Endothelial cell of umbilical vein (primary cell): ENCODE measurements at regions of chr11 and their contacts with region 1.

Region 1: DNA sequence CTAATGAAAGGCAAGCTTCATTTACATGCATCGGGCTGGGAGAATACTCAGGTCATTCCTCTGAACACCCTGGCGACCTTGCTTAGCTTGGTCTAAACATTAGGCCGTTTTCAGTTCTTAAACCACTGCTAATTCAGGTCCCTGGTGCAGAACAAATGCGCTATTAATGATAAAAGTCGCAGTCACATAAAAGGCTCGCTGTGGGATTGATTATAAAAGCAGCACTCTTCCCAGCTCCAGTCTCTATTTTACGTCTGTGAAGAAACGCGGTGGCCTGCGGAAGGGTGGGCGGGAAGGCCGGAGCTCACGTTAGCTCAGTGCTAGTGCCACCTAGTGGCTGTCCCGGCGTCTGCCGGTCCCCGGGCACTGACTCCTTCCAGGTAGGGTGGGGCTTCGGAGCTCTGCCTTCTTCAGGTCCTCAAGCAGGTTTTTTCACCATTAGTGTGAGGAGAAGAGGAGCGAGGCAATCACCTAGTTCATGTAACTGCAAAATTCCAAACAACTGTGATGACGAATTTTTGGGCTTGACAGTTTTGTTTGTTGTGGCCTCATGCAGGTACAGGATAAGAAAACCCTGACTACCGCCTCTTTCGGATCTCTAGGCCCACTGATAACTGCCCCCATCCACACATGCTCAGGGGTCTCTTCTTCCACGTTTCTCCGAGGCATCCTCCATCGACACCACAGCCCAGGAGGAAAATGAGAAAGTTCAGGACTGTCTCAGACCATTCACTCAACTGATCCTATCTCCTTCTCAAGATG is 66.5 kb upstream of the CLMP start:
- DNase-seq: peak; percentile 68
- H3K4me3 ChIP-seq: peak overlapping the region in 1 of 3 experiments; percentile 38
- H3K27ac ChIP-seq: no peak overlapping the region
- H3K4me1 ChIP-seq: no peaks in the 10 kb centered on the region
- H3K27me3 ChIP-seq: peaks cover 4 to 5% of the 10 kb centered on the region in 2 experiments
- CTCF ChIP-seq: peak; percentile 94 to 98
- POLR2A ChIP-seq: no peak

Region 2: GRCh38 chr11:123054301-123055065 is 207.0 kb before region 1 on chr11:
- CTCF ChIA-PET with region 1: interaction called, 10 read pairs
- POLR2A ChIA-PET with region 1: no interaction called
- dilution Hi-C with region 1: no loop called
- intact Hi-C with region 1: no loop called
- DNase-seq: peak; percentile 68
- H3K4me3 ChIP-seq: no peak overlapping the region
- H3K27ac ChIP-seq: no peak overlapping the region
- H3K4me1 ChIP-seq: peaks cover 13% of the 10 kb centered on the region
- H3K27me3 ChIP-seq: no peaks in the 10 kb centered on the region
- CTCF ChIP-seq: peak; percentile 62 to 65
- POLR2A ChIP-seq: peak; percentile 50

Region 3: GRCh38 chr11:123188508-123189165 is 72.9 kb before region 1 on chr11:
- CTCF ChIA-PET with region 1: interaction called, 10 read pairs
- POLR2A ChIA-PET with region 1: no interaction called
- dilution Hi-C with region 1: no loop called
- intact Hi-C with region 1: no loop called
- DNase-seq: peak; percentile 73
- H3K4me3 ChIP-seq: no peak overlapping the region
- H3K27ac ChIP-seq: no peak overlapping the region
- H3K4me1 ChIP-seq: peaks cover 11% of the 10 kb centered on the region
- H3K27me3 ChIP-seq: peaks cover 0 to 4% of the 10 kb centered on the region in 2 experiments
- CTCF ChIP-seq: peak in 1 of 2 donors; percentile 13
- POLR2A ChIP-seq: no peak

Region 4: DNA sequence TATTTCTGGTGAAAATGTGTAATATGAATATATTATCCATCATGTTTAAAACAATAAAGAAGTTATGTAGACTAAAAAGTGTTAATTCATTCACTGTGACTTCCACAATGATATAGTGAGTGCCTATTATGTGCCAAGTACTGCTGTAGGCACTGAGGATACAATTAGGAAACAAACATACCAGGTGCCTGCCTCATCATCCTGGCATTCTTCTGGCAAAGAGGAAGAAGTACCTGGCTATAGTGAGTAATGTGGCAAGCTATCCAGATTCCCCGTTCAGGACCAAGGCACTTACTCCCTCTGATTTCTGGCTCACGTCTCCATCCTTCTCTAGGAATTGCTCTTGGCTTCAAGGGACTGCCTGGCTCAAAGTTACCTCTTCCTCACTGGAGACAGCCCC is 11.0 kb after region 1 on chr11:
- CTCF ChIA-PET with region 1: interaction called, 29 read pairs
- POLR2A ChIA-PET with region 1: no interaction called
- dilution Hi-C with region 1: no loop called
- intact Hi-C with region 1: no loop called
- DNase-seq: no peak
- H3K4me3 ChIP-seq: no peak overlapping the region
- H3K27ac ChIP-seq: no peak overlapping the region
- H3K4me1 ChIP-seq: no peaks in the 10 kb centered on the region
- H3K27me3 ChIP-seq: no peaks in the 10 kb centered on the region
- CTCF ChIP-seq: no peak
- POLR2A ChIP-seq: no peak

Region 5: DNA sequence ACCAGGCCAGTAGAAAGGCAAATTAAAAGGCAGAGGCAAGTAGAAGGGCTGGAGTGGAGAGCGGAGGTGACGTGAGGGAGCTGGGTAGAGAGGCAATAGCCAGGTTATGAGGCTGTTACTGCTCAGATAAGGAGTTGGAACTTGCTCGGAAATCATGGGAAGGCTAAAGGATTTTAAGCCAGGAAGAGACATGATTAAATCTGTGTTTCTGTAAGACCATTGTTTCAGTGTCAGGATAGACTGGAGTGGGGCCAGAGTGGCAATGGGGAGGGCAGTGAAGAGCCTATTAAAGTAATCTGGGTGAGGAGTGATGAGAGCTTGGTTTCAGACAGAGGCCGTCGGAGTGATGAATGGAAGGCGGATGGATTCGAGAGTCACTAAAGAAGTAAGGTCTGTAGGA is 207.6 kb after region 1 on chr11:
- CTCF ChIA-PET with region 1: interaction called, 14 read pairs
- POLR2A ChIA-PET with region 1: no interaction called
- dilution Hi-C with region 1: no loop called
- intact Hi-C with region 1: no loop called
- DNase-seq: peak; percentile 79
- H3K4me3 ChIP-seq: no peak overlapping the region
- H3K27ac ChIP-seq: peak overlapping the region; percentile 24
- H3K4me1 ChIP-seq: peaks cover 15% of the 10 kb centered on the region
- H3K27me3 ChIP-seq: no peaks in the 10 kb centered on the region
- CTCF ChIP-seq: no peak
- POLR2A ChIP-seq: no peak